Activated T-helper 1 cell treated with anti-CD3 and anti-CD28 coated beads, Interleukin-12 subunit alpha, Interleukin-12 subunit beta, Interleukin-2, Interleukin-4 antibody, amounts not matched to agents 30 ng/mL and 10 ng/mL and 1 ng/mL, durations not matched to agents 14 hours and 24 hours and 36 hours (primary cell): ENCODE measurements at regions of chr3 and their contacts with region 1.

Region 1: GRCh38 chr3:101849051-101849720 is at the start of gene NFKBIZ:
- DNase-seq: peak; percentile 93
- H3K4me3 Mint-ChIP-seq: peak within 1 kb of the TSS; percentile 93
- H3K27ac Mint-ChIP-seq: peak within 1 kb of the TSS; percentile 96
- H3K4me1 Mint-ChIP-seq: peaks cover 50% of the 10 kb centered on the region
- H3K27me3 Mint-ChIP-seq: no peaks in the 10 kb centered on the region
- total RNA-seq, gene NFKBIZ: 72.4 and 79.7 TPM in 2 replicates

Region 2: DNA sequence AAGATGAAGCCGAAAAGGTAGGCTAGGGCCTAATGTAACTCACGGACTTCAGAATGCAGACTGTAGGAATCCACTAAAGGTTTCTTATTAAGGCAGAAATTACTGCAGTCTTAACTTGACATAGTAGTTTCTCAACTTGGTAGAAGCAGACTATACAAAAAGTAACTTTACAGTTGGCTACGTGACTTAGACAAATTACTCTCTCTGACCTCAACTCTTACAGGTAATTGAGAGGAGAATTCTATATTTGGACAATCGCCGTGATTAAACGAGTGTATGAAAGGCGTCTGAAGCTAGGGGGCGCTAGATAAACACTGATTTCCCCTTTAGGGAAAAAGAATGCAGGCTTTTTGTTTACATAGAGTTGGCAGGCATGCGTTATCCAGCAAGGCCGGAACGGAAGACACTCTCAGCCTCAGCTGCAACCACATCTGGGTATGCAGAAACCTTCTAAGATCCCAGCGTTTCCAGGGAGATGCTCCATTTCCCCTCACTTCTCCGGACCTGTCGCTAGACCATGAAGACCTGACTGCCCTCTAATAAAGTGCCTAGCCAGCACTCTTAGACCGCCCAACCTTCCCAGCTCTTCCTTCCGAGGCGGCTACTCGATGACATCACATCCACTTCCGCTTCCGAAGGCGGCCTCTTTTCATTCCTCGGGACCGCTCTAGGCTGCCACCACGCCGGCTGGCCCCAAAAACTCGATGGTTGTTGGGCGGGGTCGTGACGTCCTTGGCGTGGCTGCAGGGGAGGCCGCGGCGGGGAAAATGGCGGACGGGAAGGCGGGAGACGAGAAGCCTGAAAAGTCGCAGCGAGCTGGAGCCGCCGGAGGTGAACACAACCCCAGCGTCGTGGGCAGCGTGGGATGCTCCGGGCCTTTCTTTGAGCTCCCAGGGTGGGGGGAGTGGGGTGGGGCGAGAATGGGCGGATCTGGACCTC is 275.5 kb before region 1 on chr3 and contains the start of gene PCNP:
- intact Hi-C with region 1: loop called (anchors 2 kb)
- DNase-seq: peak; percentile 99
- H3K4me3 Mint-ChIP-seq: peak within 1 kb of the TSS; percentile 94
- H3K27ac Mint-ChIP-seq: peak within 1 kb of the TSS; percentile 99
- H3K4me1 Mint-ChIP-seq: peaks cover 68% of the 10 kb centered on the region
- H3K27me3 Mint-ChIP-seq: no peaks in the 10 kb centered on the region
- total RNA-seq, gene PCNP: 182 and 190 TPM in 2 replicates

Region 3: DNA sequence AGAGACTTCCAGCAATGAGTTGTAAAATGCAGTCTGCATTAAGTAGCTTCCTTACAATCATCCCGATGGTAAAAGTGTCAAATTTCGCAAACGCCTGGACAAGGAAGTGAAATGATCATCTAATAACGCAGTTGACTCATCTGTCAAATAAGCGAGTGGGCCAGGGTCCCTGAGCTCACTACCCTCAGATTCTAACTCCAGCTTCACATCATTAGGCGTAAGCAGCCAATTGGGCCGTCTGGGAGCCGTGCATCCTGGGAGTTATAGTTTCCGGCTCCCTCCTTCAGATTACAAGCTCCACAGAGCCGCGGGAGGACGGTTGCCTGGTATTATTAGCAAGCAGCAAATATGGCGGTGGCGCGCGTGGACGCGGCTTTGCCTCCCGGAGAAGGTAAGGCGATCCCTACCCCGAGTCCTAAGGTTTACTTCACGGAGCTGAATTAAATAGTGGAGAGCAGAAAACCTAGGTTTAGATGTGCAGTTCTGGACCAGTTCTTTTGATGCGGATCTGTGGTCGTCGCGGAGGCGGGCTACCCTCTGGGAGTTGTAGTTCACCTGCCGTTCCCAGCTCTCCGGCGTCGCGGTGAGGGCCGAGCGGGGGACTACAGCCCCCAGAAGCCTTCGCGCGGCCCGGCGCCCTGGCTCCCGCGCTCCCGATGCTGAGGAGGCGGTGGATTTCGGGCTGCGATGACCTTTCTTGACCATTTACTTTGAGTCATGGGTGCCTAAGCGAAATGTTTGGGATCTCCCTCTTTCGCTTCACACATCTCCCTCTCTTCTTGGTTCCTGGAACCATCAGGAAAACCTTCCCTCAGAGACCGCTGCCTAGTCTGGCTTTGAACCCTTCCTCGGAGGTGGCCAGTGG is 124.6 kb before region 1 on chr3 and contains the start of gene CEP97:
- intact Hi-C with region 1: loop called (anchors 1 kb)
- DNase-seq: peak; percentile 85
- H3K4me3 Mint-ChIP-seq: peak within 1 kb of the TSS; percentile 94
- H3K27ac Mint-ChIP-seq: peak within 1 kb of the TSS; percentile 96
- H3K4me1 Mint-ChIP-seq: peaks cover 54% of the 10 kb centered on the region
- H3K27me3 Mint-ChIP-seq: no peaks in the 10 kb centered on the region
- total RNA-seq, gene CEP97: 20.2 and 20.6 TPM in 2 replicates

Region 4: GRCh38 chr3:101809178-101810021 is 39.8 kb before region 1 on chr3:
- intact Hi-C with region 1: loop called (anchors 1 kb)
- DNase-seq: no peak
- H3K4me3 Mint-ChIP-seq: no peak overlapping the region
- H3K27ac Mint-ChIP-seq: peak overlapping the region; percentile 27
- H3K4me1 Mint-ChIP-seq: peaks cover 55% of the 10 kb centered on the region
- H3K27me3 Mint-ChIP-seq: no peaks in the 10 kb centered on the region

Region 5: DNA sequence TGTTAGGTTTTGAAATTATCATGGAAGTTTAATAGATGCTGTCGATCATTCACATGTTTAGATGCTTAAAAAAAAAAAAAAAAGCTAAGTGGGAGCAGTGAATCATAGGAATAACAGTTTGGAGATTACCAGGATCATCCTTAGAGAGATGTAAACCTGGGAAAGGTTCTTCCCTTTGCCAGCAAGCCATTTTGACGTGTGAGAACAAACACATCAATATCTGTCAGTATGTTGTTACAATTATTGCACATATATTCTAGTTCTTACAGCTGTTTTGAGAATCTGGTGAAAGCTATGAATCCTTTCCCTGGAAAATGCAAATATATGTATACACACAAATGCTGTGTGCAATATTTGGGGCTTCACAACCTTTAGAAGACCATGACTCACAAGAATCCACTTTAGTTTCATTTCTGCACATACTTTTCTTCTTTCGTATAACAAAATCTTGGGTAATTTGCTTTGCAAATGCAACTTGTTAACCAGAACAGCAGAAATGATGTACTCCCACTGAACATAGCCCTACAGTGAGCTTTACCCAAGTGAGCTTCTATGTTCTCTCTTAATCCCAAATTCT is 12.1 kb after region 1 on chr3:
- intact Hi-C with region 1: loop called (anchors 1 kb)
- DNase-seq: no peak
- H3K4me3 Mint-ChIP-seq: no peak overlapping the region
- H3K27ac Mint-ChIP-seq: peak overlapping the region; percentile 34
- H3K4me1 Mint-ChIP-seq: peaks cover 67% of the 10 kb centered on the region
- H3K27me3 Mint-ChIP-seq: no peaks in the 10 kb centered on the region

Region 6: DNA sequence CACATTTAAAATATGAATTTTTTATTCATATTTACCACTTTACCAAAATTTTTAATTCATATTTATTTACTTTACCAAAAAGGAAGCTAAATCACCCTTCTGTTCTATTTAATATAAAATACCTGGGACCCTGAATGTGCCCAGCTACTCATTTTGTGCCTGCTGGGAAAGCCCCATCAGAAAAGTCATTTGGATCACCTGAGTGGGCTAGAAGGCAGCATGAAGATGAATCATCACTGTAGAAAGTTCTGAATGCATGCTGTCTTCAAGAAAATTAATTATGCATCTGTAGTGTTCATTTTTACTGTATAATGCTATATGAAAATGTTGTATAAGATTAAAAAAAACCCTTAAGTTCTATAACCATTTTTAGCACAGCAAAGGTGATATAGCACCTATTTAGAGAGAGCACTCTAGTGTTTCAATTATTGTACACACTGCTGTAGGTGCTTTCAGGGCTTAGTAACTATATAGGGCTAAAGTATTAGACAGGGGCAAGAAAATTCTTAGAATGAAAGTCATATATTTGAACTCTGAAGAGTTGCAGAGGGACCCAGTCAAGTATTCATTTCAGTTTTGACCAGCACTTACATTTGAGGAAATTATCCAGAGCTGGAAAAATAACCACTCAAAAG is 175.2 kb after region 1 on chr3:
- intact Hi-C with region 1: no loop called
- DNase-seq: no peak
- H3K4me3 Mint-ChIP-seq: no peak overlapping the region
- H3K27ac Mint-ChIP-seq: no peak overlapping the region
- H3K4me1 Mint-ChIP-seq: peaks cover 9% of the 10 kb centered on the region
- H3K27me3 Mint-ChIP-seq: peaks cover 2% of the 10 kb centered on the region

Region 7: GRCh38 chr3:102089904-102090492 is 240.8 kb after region 1 on chr3:
- intact Hi-C with region 1: loop called (anchors 1 kb)
- DNase-seq: no peak
- H3K4me3 Mint-ChIP-seq: no peak overlapping the region
- H3K27ac Mint-ChIP-seq: no peak overlapping the region
- H3K4me1 Mint-ChIP-seq: peaks cover 59% of the 10 kb centered on the region
- H3K27me3 Mint-ChIP-seq: peaks cover 1% of the 10 kb centered on the region